ENCODE measurements at regions of chr9 and their contacts with region 1.

Region 1: GRCh38 chr9:105610381-105610780 is 51.9 kb upstream of the TAL2 start:
- DNase-seq: no peak
- H3K4me3 ChIP-seq: no peak overlapping the region
- H3K27ac ChIP-seq: no peak overlapping the region
- H3K4me1 ChIP-seq: no peaks in the 10 kb centered on the region
- H3K27me3 ChIP-seq: no peaks in the 10 kb centered on the region
- CTCF ChIP-seq: no peak

Region 2: GRCh38 chr9:105541838-105542237 is 68.5 kb before region 1 on chr9:
- intact Hi-C with region 1: no loop called
- DNase-seq: no peak
- H3K4me3 ChIP-seq: no peak overlapping the region
- H3K27ac ChIP-seq: no peak overlapping the region
- H3K4me1 ChIP-seq: no peaks in the 10 kb centered on the region
- H3K27me3 ChIP-seq: no peaks in the 10 kb centered on the region
- CTCF ChIP-seq: no peak

Region 3: DNA sequence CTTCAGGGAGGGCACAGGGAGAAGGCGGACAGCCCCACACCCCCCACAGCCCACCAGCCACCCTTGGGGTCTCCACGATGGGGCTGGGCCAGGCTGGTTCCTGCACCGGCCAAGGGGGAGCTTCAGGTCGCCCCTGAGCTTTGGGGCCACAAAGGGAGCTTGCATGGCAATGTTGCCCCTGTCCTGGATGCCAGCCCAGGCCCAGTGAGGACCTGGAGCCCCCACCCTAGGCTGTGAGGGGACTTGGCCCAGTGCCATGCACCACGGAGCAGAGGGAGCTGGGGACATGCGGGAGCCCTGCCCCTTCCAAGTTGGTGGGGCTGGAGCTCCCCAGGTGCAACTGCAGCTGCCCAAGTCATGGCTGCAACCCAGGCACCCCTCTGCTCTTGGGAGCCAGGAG is 102.4 kb after region 1 on chr9:
- intact Hi-C with region 1: loop called (anchors 10 kb)
- DNase-seq: no peak
- H3K4me3 ChIP-seq: no peak overlapping the region
- H3K27ac ChIP-seq: no peak overlapping the region
- H3K4me1 ChIP-seq: no peaks in the 10 kb centered on the region
- H3K27me3 ChIP-seq: no peaks in the 10 kb centered on the region
- CTCF ChIP-seq: no peak

Region 4: GRCh38 chr9:105881654-105882349 is 271.4 kb after region 1 on chr9:
- intact Hi-C with region 1: loop called (anchors 5 kb)
- DNase-seq: peak in 1 of 2 donors; percentile 68
- H3K4me3 ChIP-seq: no peak overlapping the region
- H3K27ac ChIP-seq: no peak overlapping the region
- H3K4me1 ChIP-seq: no peaks in the 10 kb centered on the region
- H3K27me3 ChIP-seq: no peaks in the 10 kb centered on the region
- CTCF ChIP-seq: peak; percentile 37 to 68

Measured in tibial artery (tissue), 4 donors.